GM12878 (cell line): ENCODE measurements at regions of chr3 and their contacts with region 1.

Region 1: GRCh38 chr3:171417813-171418212 is 42.4 kb downstream of the TNIK start:
- DNase-seq: no peak
- ATAC-seq: no peak
- H3K4me3 ChIP-seq: no peak overlapping the region
- H3K27ac ChIP-seq: no peak overlapping the region
- H3K4me1 ChIP-seq: peaks cover 9% of the 10 kb centered on the region
- H3K27me3 ChIP-seq: no peaks in the 10 kb centered on the region
- CTCF ChIP-seq: no peak
- EP300 ChIP-seq: no peak
- POLR2A ChIP-seq: no peak
- RAD21 ChIP-seq: no peak

Region 2: GRCh38 chr3:171312741-171313140 is 105.1 kb before region 1 on chr3:
- CTCF ChIA-PET with region 1: no interaction called
- POLR2A ChIA-PET with region 1: interaction called, 10 read pairs
- RAD21 ChIA-PET with region 1: interaction called, 3 read pairs
- SMC1A ChIA-PET with region 1: interaction called, 3 read pairs
- in situ Hi-C with region 1: no loop called
- intact Hi-C with region 1: no loop called
- DNase-seq: no peak
- ATAC-seq: no peak
- H3K4me3 ChIP-seq: no peak overlapping the region
- H3K27ac ChIP-seq: no peak overlapping the region
- H3K4me1 ChIP-seq: peaks cover 14% of the 10 kb centered on the region
- H3K27me3 ChIP-seq: no peaks in the 10 kb centered on the region
- CTCF ChIP-seq: no peak
- EP300 ChIP-seq: no peak
- POLR2A ChIP-seq: no peak
- RAD21 ChIP-seq: no peak

Region 3: GRCh38 chr3:171436380-171436779 is 18.6 kb after region 1 on chr3:
- CTCF ChIA-PET with region 1: interaction called, 5 read pairs
- POLR2A ChIA-PET with region 1: interaction called, 6 read pairs
- RAD21 ChIA-PET with region 1: interaction called, 7 read pairs
- SMC1A ChIA-PET with region 1: interaction called, 11 read pairs
- in situ Hi-C with region 1: no loop called
- intact Hi-C with region 1: no loop called
- DNase-seq: no peak
- ATAC-seq: peak; percentile 40
- H3K4me3 ChIP-seq: no peak overlapping the region
- H3K27ac ChIP-seq: no peak overlapping the region
- H3K4me1 ChIP-seq: peaks cover 11% of the 10 kb centered on the region
- H3K27me3 ChIP-seq: no peaks in the 10 kb centered on the region
- CTCF ChIP-seq: no peak
- EP300 ChIP-seq: no peak
- POLR2A ChIP-seq: no peak
- RAD21 ChIP-seq: no peak